ENCODE measurements at regions of chr16 and their contacts with region 1.

Region 1: DNA sequence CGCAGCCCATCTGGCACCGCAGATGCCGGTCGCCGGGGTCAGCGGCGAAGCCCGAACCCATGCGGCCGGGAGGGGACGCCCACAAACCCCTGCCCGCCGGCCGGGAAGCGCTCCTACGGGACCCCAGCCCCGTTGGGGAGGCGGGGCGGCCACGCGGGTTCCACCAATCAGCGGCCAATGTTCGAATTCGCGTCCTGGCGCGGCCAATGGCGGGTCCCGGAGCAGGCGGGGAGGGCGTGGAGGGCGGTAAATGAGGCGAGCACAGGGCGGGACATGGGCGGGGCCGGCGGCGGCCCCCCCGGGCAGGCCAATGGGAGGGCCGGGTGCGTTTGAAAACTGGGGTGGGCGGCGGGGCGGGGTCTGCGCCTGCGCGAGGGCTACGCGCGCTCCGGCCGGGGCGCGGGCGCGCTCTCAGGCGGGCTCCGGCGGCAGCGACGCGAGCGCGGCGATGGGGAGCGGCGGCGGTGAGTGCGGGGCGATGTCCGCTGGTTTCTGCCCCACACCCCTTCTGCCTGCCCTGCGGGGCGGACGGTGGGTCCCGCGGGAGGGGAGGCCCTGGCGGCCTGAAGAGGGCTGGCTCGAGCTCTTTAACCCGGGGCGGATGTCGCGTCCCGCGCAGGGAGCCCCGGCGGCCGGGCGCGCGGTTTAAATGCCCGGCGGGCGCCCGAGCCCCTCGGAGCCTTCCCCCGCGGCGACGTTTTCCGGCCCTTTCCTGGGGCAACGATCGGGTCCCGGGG is at the start of gene CCNF:
- DNase-seq: peak; percentile 95 to 98 (median 97)
- H3K4me3 ChIP-seq: peak within 1 kb of the TSS; percentile 35 to 90 (median 64)
- H3K27ac ChIP-seq: peak within 1 kb of the TSS in 3 of 5 donors; percentile 55 to 76 (median 70)
- H3K4me1 ChIP-seq: peaks cover 0 to 10% of the 10 kb centered on the region in 2 donors
- H3K27me3 ChIP-seq: no peaks in the 10 kb centered on the region
- CTCF ChIP-seq: peak in 2 of 6 experiments; percentile 44 to 49
- POLR2A ChIP-seq: peak in 1 of 2 donors; percentile 40
- total RNA-seq, gene CCNF: 1.6 to 5.4 (median 2.5) TPM

Region 2: GRCh38 chr16:2340564-2341455 is 88.4 kb before region 1 on chr16 and contains the start of gene ABCA3:
- intact Hi-C with region 1: loop called (anchors 5 kb)
- DNase-seq: peak; percentile 89 to 98 (median 95)
- H3K4me3 ChIP-seq: peak within 1 kb of the TSS in 3 of 4 donors; percentile 38 to 88 (median 45)
- H3K27ac ChIP-seq: peak within 1 kb of the TSS in 3 of 5 donors; percentile 10 to 74 (median 57)
- H3K4me1 ChIP-seq: peaks cover 5 to 9% of the 10 kb centered on the region in 2 donors
- H3K27me3 ChIP-seq: no peaks in the 10 kb centered on the region
- CTCF ChIP-seq: peak; percentile 94 to 100 (median 100)
- POLR2A ChIP-seq: peak; percentile 28 to 46
- total RNA-seq, gene ABCA3: 3.3 to 30.8 (median 23.4) TPM